ENCODE measurements at regions of chr2 and their contacts with region 1.

Region 1: GRCh38 chr2:236536727-236537398 is 32.8 kb upstream of the ACKR3 start:
- DNase-seq: peak; percentile 87
- H3K4me3 Mint-ChIP-seq: peak overlapping the region; percentile 92
- H3K27ac Mint-ChIP-seq: peak overlapping the region; percentile 89
- H3K4me1 Mint-ChIP-seq: peaks cover 49% of the 10 kb centered on the region
- H3K27me3 Mint-ChIP-seq: no peaks in the 10 kb centered on the region

Region 2: GRCh38 chr2:236298924-236299475 is 237.9 kb before region 1 on chr2:
- intact Hi-C with region 1: no loop called
- DNase-seq: no peak
- H3K4me3 Mint-ChIP-seq: no peak overlapping the region
- H3K27ac Mint-ChIP-seq: no peak overlapping the region
- H3K4me1 Mint-ChIP-seq: no peaks in the 10 kb centered on the region
- H3K27me3 Mint-ChIP-seq: no peaks in the 10 kb centered on the region

Region 3: DNA sequence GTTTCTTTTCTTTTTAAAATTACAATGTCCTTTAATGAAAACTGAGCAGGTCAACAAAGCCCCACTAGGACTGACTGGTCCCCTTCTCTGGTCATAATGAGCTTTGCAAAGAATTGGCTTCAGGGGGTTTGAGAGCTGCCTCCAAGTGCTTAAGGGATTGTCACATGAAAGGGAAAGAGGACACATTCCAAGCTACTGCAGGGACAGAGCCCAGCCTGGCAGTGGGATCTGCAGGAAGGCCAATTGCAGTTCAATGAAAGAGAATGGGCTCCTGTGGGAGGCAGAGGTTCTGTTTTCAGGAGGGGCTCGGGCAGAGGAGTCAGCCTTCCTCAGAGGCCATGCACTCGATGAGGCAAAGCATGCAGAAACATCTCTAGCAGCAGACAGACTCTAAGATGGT is 51.3 kb before region 1 on chr2:
- intact Hi-C with region 1: no loop called
- DNase-seq: no peak
- H3K4me3 Mint-ChIP-seq: no peak overlapping the region
- H3K27ac Mint-ChIP-seq: no peak overlapping the region
- H3K4me1 Mint-ChIP-seq: no peaks in the 10 kb centered on the region
- H3K27me3 Mint-ChIP-seq: peaks cover 17% of the 10 kb centered on the region

Region 4: GRCh38 chr2:236551471-236552211 is 14.8 kb after region 1 on chr2:
- intact Hi-C with region 1: loop called (anchors 1 kb)
- DNase-seq: no peak
- H3K4me3 Mint-ChIP-seq: no peak overlapping the region
- H3K27ac Mint-ChIP-seq: peak overlapping the region; percentile 38
- H3K4me1 Mint-ChIP-seq: peaks cover 66% of the 10 kb centered on the region
- H3K27me3 Mint-ChIP-seq: no peaks in the 10 kb centered on the region

Region 5: DNA sequence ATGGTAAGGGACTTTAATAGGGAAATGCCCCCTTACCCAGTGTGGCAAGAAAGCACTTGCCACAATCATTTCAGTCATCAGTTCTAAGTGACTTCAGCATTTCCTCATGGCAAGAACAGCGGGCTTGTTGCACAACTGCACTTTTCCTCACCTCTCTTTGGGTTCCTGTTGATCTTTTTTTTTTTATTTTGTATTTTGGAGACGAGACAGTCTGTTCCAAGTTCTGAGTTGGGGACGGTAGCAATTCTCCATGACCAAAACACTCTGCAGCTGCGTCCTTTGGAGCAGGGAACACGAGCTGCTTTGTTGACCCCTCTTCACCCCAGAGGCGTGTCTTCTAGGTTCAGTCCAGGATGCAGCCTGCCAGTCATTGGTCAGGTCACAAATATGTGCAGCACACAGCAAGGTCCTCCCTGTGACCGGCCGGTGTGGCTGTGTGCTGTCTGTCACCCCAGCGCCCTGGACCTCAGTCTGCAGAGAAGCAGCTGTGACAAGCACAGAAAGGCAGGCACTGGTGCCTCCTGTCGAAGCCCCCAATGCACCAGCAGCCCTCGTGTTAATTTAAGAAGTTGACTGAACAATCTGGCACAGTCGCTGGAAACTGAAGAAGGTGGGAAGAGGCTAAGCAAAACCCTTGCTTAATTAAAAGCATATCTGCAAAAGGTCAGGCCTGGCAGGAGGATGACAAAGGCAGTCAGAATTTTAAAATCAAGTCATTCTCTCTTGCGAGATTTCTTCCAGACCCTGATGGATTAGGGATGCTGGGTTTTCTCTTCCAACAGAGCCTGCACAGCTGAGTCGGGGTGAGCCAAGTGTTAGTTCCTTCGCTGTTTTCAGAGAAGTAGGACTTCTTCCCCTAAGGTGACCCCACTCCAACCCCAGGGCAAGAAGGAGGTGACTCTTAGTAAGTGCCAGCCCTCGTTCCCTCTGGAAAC is 452.1 kb after region 1 on chr2:
- intact Hi-C with region 1: no loop called
- DNase-seq: no peak
- H3K4me3 Mint-ChIP-seq: no peak overlapping the region
- H3K27ac Mint-ChIP-seq: no peak overlapping the region
- H3K4me1 Mint-ChIP-seq: no peaks in the 10 kb centered on the region
- H3K27me3 Mint-ChIP-seq: peaks cover 4% of the 10 kb centered on the region